Right ventricle myocardium superior (tissue), 1 donor: ENCODE measurements at regions of chr3 and their contacts with region 1.

Region 1: DNA sequence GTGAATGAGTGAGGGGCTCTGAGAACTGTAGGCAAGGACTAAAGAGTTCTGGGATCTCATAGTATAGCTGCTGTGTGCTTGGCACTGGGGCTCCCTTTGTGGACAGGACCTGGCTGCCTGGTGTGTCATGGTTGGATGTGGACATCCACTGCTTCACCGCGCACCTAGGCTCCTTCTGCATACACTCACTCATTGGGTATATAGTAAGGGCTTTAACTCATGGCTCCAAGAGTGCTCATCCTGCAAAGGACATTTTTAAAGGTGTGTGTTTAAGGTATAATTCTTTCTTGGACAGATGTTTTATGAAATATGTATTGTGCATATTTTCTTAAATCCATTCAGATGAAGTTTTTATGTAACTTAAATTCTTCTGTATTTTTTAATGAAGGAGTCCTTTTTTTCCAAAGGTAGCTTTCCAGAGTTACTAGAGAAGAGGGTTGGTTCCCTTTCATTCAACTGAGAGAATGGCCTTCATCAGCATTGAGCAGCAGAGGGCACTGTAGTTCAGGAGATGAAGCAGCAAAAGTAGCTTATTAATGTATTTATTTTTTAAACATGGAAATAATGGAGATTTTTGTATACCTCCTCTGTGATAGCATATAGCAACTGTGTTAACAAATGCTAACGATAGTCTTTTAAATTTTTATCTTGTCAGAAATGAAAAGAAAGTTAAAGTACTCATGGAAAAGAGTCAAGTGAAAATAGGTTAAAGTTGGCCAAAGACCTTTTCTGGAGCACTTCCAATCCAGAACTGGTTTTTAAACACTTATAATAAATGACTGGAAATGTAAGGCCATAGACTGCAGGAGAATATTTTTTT is 25.2 kb downstream of the OXNAD1 start:
- DNase-seq: no peak
- ATAC-seq: peak; percentile 50

Region 2: GRCh38 chr3:16511681-16512434 is 221.6 kb after region 1 on chr3:
- intact Hi-C with region 1: loop called (anchors 10 kb)
- DNase-seq: peak; percentile 80
- ATAC-seq: peak; percentile 47

Region 3: GRCh38 chr3:16533928-16534574 is 243.8 kb after region 1 on chr3:
- intact Hi-C with region 1: loop called (anchors 5 kb)
- DNase-seq: no peak
- ATAC-seq: no peak

Region 4: GRCh38 chr3:16550676-16551341 is 260.6 kb after region 1 on chr3:
- intact Hi-C with region 1: loop called (anchors 5 kb)
- DNase-seq: no peak
- ATAC-seq: peak; percentile 87

Region 5: GRCh38 chr3:16741103-16741758 is 451.0 kb after region 1 on chr3:
- intact Hi-C with region 1: no loop called
- DNase-seq: no peak
- ATAC-seq: no peak

Region 6: DNA sequence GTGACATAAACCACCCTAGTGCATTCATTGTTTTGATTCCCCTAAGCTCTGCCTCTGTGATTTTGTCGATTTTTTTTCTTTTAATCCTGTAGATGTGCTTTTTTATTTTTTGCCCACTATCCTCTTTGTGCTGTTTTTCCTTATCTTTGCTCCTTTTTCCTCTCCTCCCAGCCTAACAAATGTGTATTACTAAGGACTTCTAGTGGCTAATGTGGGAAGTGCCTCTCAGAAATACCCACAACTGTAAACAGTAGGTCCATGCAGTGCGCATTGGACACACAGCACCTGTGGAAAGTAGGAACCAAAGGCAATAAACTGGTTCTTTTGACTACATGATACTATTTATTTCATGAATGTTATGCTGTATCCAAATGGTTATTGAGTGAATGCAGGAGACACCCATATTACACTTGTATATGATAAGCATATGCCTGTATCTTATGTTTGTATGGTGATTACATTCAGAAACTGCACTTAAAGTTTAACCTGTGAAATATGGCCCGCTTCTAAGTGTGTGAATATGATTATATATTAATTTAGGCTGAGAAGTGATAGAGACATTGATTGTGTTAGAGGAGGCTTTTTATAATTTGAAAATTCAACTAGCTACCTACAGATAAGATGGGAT is 742.3 kb after region 1 on chr3:
- intact Hi-C with region 1: loop called (anchors 10 kb)
- DNase-seq: no peak
- ATAC-seq: peak; percentile 54